ENCODE measurements at regions of chr22 and their contacts with region 1.

Region 1: GRCh38 chr22:22748297-22748743 is 103.9 kb downstream of the GGTLC2 start:
- DNase-seq: peak in 1 of 2 experiments; percentile 60
- H3K4me3 ChIP-seq: no peak overlapping the region
- H3K4me3 Mint-ChIP-seq: no peak overlapping the region
- H3K27ac Mint-ChIP-seq: no peak overlapping the region
- H3K4me1 ChIP-seq: no peaks in the 10 kb centered on the region
- H3K4me1 Mint-ChIP-seq: no peaks in the 10 kb centered on the region
- H3K27me3 ChIP-seq: no peaks in the 10 kb centered on the region; the same call in none of the 2 replicates
- H3K27me3 Mint-ChIP-seq: peaks cover 4% of the 10 kb centered on the region
- CTCF ChIP-seq: peak; percentile 69 to 74

Region 2: DNA sequence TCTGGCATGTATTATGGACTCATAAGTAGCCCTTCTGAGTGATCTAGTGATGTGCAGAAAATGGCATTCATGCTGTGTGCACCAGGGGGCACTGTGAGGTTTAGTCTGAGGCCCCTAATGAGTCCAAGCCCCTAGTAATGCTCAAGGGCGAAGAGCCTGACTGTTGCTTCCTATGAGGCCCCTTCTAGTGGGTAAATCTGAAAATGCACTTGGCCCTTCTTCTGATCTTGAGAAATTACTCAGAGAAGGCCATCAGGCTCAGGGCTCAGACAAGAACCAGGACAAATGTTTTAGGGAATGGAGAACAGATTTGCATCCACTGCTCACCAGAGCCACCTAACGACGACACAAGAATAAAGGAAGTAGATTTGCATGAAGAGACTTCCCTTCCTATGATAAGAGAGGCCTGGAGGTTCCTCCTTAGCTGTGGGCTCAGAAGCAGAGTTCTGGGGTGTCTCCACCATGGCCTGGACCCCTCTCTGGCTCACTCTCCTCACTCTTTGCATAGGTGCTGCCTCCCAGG is 28.1 kb before region 1 on chr22:
- CTCF ChIA-PET with region 1: interaction called, 7 read pairs
- POLR2A ChIA-PET with region 1: no interaction called
- intact Hi-C with region 1: loop called (anchors 1 kb)
- DNase-seq: peak; percentile 54 to 61
- H3K4me3 ChIP-seq: no peak overlapping the region
- H3K4me3 Mint-ChIP-seq: no peak overlapping the region
- H3K27ac Mint-ChIP-seq: no peak overlapping the region
- H3K4me1 ChIP-seq: no peaks in the 10 kb centered on the region
- H3K4me1 Mint-ChIP-seq: no peaks in the 10 kb centered on the region
- H3K27me3 ChIP-seq: no peaks in the 10 kb centered on the region
- H3K27me3 Mint-ChIP-seq: peaks cover 15% of the 10 kb centered on the region
- CTCF ChIP-seq: peak; percentile 57 to 66

Measured in Caco-2 (cell line).